ENCODE measurements at regions of chr2 and their contacts with region 1.

Region 1: DNA sequence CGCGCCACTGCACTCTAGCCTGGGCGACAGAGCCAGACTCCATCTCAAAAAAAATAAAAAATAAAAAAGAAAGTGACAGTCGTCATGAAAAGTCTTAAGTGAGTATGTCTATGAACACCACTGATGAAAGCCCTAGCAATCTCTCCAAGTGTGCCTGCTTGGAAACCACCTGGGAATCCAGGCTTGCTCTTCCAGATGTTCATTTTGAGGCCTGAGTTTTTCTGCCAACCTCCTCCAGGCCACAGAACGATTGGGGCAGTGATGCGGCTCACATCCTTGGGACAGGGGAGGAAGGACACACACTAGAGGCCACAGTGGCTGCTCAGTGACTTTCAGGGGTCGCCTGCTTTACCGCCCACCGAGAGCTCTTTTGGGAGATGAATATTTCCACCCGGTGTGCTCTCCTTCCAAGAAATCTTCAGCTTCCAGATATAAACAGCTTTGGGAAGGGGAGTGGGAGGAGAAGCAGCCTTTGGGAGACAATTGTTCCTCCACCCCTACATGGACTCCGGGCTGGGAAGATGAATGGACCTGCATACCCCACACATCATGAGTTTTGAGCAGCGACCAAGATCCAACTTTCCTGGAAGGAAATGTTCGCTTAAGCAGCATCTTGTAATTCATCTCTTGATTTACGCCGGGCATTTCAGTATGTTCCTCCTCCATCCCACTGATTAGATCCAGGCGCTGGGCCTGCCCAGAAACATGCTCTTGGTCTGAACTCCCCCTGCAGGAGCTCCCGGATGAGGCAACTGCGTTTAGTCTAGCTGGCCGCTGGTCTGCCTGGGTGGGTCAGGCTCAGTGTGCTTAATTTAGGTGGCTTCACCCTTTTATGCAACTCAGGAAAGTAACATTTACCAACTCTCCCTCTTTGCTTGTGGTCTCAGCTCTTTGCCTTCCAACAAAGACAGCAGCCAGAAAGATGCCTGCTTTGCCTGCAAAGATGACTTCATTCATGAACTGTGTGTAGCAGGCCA is 6.2 kb upstream of the ARMC9 start:
- DNase-seq: peak; percentile 73 to 84
- ATAC-seq: peak in 7 of 8 donors; percentile 54 to 74 (median 65)
- H3K4me3 ChIP-seq: no peak overlapping the region
- H3K27ac ChIP-seq: peak overlapping the region in 8 of 10 donors; percentile 38 to 97 (median 86)
- H3K4me1 ChIP-seq: peaks cover 14 to 47% (median 22%) of the 10 kb centered on the region in 9 donors
- H3K27me3 ChIP-seq: peaks cover 0 to 16% (median 0%) of the 10 kb centered on the region in 7 donors
- CTCF ChIP-seq: peak; percentile 53 to 79 (median 66)

Region 2: GRCh38 chr2:231110551-231110950 is 81.6 kb before region 1 on chr2:
- intact Hi-C with region 1: loop called in 7 of 10 experiments (anchors 2 to 10 kb)
- DNase-seq: no peak
- ATAC-seq: peak in 7 of 8 donors; percentile 58 to 87 (median 75)
- H3K4me3 ChIP-seq: no peak overlapping the region
- H3K27ac ChIP-seq: peak overlapping the region in 1 of 10 donors; percentile 43
- H3K4me1 ChIP-seq: peaks cover 0 to 34% (median 12%) of the 10 kb centered on the region in 9 donors
- H3K27me3 ChIP-seq: no peaks in the 10 kb centered on the region
- CTCF ChIP-seq: peak in 7 of 9 donors; percentile 16 to 63 (median 40)

Measured in heart right ventricle (tissue), 16 donors.